ENCODE measurements at regions of chr15 and their contacts with region 1.

Region 1: GRCh38 chr15:25693321-25694237 is 169.5 kb downstream of the ATP10A start:
- DNase-seq: no peak
- H3K4me3 ChIP-seq: no peak overlapping the region
- CTCF ChIP-seq: peak; percentile 86

Region 2: DNA sequence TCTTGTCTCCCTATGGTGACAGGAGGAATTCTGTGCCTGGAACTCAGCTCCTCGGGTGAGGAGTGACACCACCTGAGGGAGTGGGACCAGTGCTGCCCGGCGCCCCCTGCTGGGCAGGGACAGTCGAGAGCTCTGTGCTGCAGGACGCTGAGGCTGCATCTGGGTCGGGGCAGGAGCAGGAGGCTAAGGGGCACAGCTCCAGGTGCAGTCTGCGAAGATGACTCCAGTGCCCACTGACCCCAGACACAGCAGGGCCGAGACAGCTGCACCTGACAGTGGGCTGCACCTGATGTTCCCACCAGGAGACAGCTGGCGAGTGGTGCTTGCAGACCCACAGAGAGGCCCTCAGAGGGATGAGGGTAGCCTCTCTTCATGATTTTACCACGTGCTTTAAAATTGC is 16.6 kb after region 1 on chr15:
- CTCF ChIA-PET with region 1: interaction called, 18 read pairs
- POLR2A ChIA-PET with region 1: no interaction called
- DNase-seq: no peak
- H3K4me3 ChIP-seq: no peak overlapping the region
- CTCF ChIP-seq: peak; percentile 87

Region 3: DNA sequence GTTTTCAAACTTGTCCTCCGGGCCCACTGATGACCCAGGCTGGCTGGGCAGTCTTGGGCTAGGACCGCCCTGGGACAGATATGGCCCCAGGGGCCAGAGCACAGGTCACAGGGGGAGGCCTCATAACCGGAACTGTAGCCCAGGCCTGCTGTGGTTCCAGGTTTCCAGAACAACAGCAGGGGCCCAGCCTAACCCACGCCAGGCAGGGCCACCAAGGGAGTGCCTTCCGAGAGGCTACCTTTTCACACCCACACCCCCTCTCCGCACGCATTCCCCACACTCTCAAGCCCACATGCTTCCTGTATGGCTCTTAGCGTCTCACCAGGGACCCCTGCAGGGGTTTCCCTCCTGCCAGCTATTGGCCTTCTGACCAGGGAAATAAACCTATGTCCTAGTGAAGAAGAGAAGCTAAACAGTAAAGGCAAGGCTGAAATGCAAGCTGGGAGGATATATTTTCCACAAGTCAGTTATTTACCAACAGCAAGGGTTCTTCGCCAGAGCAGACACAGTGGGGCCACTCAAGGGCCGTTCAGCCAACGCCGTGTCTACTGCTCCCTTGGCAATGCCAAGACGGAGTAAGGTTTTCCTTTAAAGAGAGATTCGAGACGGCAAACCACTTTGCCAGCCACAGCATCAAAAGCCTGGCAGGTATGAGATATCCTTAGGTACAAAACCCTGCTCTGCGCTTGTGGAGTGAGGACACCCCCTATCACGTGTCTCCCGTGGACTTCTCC is 34.5 kb after region 1 on chr15:
- CTCF ChIA-PET with region 1: no interaction called
- POLR2A ChIA-PET with region 1: no interaction called
- DNase-seq: no peak
- H3K4me3 ChIP-seq: no peak overlapping the region
- CTCF ChIP-seq: no peak